ENCODE measurements at regions of chr9 and their contacts with region 1.

Region 1: GRCh38 chr9:107637421-107638420 is 148.2 kb upstream of the KLF4 start:
- DNase-seq: peak; percentile 94

Region 2: DNA sequence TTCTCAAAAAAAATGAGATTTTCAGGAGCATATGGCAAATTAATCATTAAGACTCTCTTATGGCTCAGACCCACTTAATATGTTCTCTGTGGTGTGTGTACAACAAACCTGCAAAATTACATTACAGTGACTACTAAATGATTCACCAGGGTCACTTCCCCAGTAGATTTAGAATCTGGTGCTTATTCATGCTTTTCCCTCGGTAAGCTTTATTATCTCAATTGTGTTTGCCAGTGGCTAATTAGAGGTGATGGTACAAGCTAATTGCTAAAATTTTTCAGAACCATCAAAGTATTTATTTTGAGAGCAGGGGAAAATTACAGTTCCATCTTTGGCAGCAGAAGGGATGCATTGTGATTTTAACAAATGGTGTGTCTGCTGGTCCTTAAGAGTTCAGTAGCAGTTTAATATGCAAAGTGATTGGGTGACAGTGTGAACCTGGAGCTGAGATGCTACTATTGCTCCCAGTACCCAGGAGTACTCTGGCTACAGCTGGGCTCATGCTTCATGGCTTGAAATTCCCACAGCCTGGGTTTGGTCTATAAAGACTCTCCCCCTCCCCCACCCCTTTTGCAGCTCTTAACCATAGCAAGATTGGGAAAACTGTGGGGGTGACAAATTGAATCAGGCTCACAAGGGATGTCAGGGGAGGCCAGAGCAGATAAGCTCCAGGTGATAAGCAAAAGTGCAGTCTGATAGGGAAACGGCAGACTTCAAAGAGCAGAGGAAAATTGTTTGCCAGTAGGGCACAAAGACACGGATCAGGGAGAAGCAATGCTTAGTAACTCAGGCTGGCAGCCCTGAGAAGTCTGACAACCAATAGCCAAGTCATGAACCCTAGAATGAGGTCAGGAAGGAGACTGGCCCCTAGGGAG is 447.4 kb before region 1 on chr9:
- intact Hi-C with region 1: no loop called
- DNase-seq: no peak

Region 3: GRCh38 chr9:107587191-107587963 is 50.3 kb before region 1 on chr9:
- intact Hi-C with region 1: loop called (anchors 1 kb)
- DNase-seq: peak; percentile 85

Region 4: DNA sequence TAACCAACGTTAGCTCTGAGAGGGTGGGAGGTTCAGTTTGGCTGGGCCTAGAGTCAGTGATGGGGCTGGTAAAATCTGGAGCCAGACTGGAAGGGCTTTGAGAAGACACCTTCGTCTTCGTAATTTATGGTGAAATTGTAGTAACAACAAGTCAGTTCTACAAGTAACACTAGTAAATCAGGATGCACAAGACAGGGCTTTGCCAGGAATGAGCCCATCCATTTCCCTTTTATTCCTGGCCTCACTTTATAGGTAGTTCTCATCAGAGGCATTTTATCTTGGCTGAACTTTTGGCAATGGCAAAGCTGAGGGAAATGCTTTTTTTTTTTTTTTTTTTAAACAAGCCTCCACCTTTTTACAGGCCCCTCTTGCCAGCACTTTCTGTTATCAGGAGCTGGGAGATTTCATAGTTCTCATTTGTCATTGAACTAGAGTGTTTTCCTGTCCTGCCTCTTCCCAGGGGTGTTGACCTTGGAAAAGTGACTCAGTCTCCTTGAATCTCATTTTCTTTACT is 37.6 kb before region 1 on chr9:
- intact Hi-C with region 1: loop called (anchors 5 kb)
- DNase-seq: no peak

Region 5: GRCh38 chr9:107749787-107750444 is 112.2 kb after region 1 on chr9:
- intact Hi-C with region 1: loop called (anchors 5 kb)
- DNase-seq: peak; percentile 92

Region 6: DNA sequence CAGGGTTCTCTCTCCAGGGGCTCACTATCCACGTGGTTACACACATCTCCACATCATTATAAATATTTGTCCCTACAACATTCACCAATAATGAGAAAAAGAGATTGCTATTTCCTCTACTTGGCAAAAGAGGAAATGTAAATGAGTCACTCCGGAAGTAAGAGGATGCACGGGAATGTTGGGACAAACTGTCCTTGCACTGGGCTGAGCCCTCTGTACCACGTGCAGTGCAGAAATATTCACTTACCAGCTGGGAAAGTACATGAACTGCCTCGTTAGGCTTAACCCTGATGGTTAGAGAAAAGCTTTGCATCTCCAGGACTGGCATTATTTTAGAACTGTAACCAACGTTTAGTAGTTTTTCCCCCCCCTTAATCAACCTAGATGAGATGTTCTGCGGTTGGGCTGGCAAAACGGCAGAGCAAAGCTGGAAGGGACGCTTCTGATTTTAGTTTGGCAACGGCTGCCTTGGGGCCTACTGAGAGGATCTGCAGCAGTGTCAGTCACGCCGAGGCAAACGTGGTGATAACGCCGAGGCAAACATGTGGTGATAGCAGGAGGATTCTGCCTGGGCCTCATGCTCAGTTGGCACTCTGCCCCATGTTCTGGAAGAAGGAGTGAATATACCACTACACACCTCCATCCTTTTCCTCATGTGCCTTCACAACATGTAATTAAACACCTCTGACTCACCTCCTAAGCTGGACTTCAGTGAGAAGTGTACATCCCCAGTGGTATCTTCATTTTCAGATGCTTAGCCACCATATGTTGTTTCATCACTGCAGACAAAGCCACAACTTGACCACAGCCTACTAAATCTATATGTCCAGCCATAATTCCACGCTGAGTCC is 513.2 kb after region 1 on chr9:
- intact Hi-C with region 1: loop called (anchors 10 kb)
- DNase-seq: no peak

Measured in cardiac septum (tissue), 1 donor.